CD4-positive, alpha-beta T cell (primary cell): ENCODE measurements at regions of chr19 and their contacts with region 1.

Region 1: DNA sequence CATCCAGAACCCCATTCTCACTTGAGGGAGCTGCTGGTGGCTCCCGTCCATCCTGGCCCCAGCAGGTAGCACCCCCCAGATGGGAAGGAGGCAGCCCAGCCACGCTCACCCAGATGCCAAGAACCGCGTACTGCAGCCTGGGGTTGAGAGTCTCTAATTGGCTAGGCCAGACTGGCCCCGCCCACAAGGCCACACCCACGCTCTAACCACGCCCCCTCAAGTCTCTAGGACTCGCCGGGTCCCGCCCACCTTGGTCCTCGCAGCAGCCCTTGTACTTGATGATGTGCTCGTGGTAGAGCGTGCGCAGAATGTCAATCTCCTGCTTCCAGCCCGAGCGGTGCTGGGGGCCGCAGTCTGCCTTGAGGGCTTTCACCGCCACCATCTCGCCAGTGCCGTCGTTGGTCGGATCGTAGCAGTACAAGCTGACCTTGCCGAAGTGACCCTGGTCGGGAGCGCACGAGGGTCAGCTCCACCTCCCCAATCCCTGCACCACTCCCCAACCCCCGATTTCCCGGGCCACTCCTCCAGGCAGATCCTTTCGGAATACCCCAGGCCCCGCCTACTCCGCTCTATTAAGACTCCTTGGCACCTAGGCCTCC is 14.5 kb upstream of the ICAM3 start:
- DNase-seq: peak in 6 of 14 experiments; percentile 11 to 69 (median 27)
- ATAC-seq: peak; percentile 64
- H3K4me3 ChIP-seq: no peak overlapping the region
- H3K4me3 Mint-ChIP-seq: no peak overlapping the region
- H3K27ac ChIP-seq: no peak overlapping the region
- H3K27ac Mint-ChIP-seq: no peak overlapping the region
- H3K4me1 ChIP-seq: no peaks in the 10 kb centered on the region
- H3K4me1 Mint-ChIP-seq: no peaks in the 10 kb centered on the region
- H3K27me3 ChIP-seq: no peaks in the 10 kb centered on the region
- H3K27me3 Mint-ChIP-seq: no peaks in the 10 kb centered on the region
- CTCF ChIP-seq: no peak

Region 2: DNA sequence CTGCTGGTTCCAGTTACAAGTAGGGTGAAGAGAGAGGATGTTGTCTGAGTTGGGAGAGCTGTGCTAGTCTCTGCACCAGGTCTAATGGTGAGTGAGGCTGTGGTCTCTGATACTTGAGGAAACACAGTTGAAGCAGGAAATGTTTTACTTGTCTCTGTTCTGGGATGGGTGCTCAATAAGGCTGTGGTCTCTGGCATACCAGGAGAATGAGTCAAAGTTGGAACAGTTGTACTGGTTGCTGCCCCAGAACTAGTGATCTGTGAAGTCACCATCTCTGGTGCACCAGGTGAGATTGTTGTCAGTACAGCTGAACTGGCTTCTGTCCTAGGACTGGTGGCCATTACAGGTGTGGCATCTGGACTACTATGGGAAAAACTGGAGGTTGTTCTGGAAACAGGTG is 1418.4 kb before region 1 on chr19:
- CTCF ChIA-PET with region 1: no interaction called
- POLR2A ChIA-PET with region 1: no interaction called
- intact Hi-C with region 1: loop called in 1 of 2 experiments (anchors 10 kb)
- DNase-seq: no peak
- ATAC-seq: no peak
- H3K4me3 ChIP-seq: no peak overlapping the region
- H3K4me3 Mint-ChIP-seq: no peak overlapping the region
- H3K27ac ChIP-seq: no peak overlapping the region
- H3K27ac Mint-ChIP-seq: no peak overlapping the region
- H3K4me1 ChIP-seq: no peaks in the 10 kb centered on the region
- H3K4me1 Mint-ChIP-seq: no peaks in the 10 kb centered on the region
- H3K27me3 ChIP-seq: peaks cover 0 to 2% of the 10 kb centered on the region in 2 experiments
- H3K27me3 Mint-ChIP-seq: peaks cover 25% of the 10 kb centered on the region
- CTCF ChIP-seq: no peak

Region 3: DNA sequence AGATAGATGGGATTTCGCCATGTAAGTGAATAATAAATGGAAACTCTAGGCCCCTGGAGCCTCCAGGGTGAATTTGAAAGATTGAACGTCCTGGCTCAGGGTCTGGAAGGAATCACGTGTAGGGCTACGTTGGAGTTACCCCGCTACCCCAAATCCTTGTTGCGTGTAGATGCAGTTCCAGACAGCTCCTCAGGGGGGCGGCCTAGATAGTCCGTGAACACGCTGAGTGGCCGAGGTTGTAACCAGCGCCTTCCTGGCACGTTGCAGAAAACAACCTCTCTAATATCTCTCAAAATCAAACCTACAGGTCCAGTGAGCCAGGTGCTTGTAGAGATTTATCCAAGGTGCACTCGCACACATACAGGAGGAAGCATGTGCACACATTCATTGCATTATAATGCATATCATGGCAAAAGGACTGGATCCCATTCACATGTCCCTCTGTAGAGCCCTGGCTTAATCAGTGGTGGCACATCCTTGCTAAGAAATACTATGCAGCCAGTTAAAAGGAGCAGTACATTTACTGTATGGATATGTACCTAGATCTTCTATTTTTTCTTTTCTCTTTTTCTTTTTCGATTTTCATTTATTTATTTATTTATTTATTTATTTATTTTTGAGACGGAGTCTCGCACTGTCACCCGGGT is 151.8 kb after region 1 on chr19:
- CTCF ChIA-PET with region 1: no interaction called
- POLR2A ChIA-PET with region 1: no interaction called
- intact Hi-C with region 1: no loop called
- DNase-seq: peak; percentile 71 to 89 (median 80)
- ATAC-seq: peak; percentile 60
- H3K4me3 ChIP-seq: no peak overlapping the region
- H3K4me3 Mint-ChIP-seq: peak overlapping the region; percentile 91
- H3K27ac ChIP-seq: no peak overlapping the region
- H3K27ac Mint-ChIP-seq: peak overlapping the region; percentile 50
- H3K4me1 ChIP-seq: peaks cover 51% of the 10 kb centered on the region
- H3K4me1 Mint-ChIP-seq: peaks cover 15% of the 10 kb centered on the region
- H3K27me3 ChIP-seq: no peaks in the 10 kb centered on the region
- H3K27me3 Mint-ChIP-seq: peaks cover 4% of the 10 kb centered on the region
- CTCF ChIP-seq: peak; percentile 78